Kidney (tissue), 22 donors: ENCODE measurements at regions of chr15 and their contacts with region 1.

Region 1: DNA sequence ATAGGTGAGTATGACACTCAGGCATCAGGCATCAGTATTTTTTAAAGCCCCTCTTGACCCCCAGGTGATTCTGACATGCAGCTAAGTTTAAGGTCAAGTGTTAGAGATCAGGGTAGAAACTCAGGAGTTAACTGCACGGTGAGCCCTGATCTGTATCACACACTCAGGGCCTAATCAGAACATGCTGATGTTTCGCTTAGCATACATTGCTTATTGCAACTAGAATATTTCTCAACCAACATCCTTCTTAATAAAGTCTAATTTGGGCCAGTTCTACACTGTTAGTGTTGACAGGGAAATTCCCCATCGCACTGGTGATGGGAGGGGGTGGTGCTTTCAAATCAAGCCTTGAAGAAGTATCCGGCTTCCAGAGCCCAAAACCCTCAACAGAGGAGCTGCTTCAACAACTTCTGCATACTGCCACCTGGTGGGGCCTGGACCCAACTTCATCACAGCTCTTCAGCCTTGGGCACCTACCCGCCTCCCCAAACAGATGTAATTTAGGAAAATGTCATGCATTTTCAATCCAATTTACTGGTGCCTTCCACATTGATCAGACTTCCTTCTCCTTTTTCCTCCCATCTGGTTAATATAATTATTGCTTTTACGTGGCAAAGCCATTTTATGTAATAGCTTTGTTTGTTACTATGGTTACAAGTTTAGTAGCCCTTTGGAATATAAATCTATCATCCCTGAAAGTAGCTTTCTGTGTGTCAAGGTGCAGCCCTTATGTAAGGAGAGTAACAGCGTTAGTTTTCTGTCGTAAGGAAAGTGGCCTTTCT is 312.2 kb downstream of the RORA start:
- DNase-seq: peak; percentile 82 to 95 (median 90)
- H3K4me3 ChIP-seq: peak overlapping the region in 1 of 3 donors; percentile 19
- H3K27ac ChIP-seq: peak overlapping the region; percentile 73 to 76
- H3K4me1 ChIP-seq: peaks cover 0 to 22% (median 21%) of the 10 kb centered on the region in 3 donors
- H3K27me3 ChIP-seq: no peaks in the 10 kb centered on the region
- CTCF ChIP-seq: peak; percentile 78

Region 2: GRCh38 chr15:60585743-60586708 is 330.8 kb before region 1 on chr15:
- intact Hi-C with region 1: loop called (anchors 10 kb)
- DNase-seq: peak in 4 of 5 donors; percentile 48 to 85 (median 62)
- H3K4me3 ChIP-seq: no peak overlapping the region
- H3K27ac ChIP-seq: no peak overlapping the region
- H3K4me1 ChIP-seq: peaks cover 0 to 3% (median 0%) of the 10 kb centered on the region in 3 donors
- H3K27me3 ChIP-seq: peaks cover 2% of the 10 kb centered on the region
- CTCF ChIP-seq: peak; percentile 82